Naive thymus-derived CD4-positive, alpha-beta T cell (primary cell): ENCODE measurements at regions of chr17 and their contacts with region 1.

Region 1: DNA sequence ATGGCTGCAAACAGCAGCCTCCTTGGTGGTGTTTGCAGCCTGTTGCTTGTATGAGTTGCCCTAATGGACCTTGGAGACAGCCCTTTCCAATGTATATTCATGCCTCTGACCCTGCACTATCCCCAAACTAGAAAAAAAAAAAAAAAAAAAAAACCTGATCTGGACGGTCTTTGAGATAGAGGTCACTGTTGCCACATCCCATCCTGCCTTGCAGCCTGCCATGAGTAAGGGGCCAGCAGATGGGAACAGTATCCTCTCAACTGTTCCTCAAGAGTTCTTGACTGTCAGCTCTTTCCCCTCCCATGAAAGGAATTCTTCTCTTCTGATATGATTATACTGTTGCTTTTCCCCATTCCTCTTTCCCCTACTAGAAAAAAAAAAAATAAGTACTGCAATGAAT is 152.4 kb downstream of the SSH2 start:
- DNase-seq: no peak
- ATAC-seq: no peak
- H3K4me3 ChIP-seq: no peak overlapping the region
- H3K4me3 Mint-ChIP-seq: no peak overlapping the region
- H3K27ac ChIP-seq: no peak overlapping the region
- H3K27ac Mint-ChIP-seq: no peak overlapping the region
- H3K4me1 ChIP-seq: peaks cover 0 to 5% of the 10 kb centered on the region in 2 donors
- H3K4me1 Mint-ChIP-seq: peaks cover 0 to 9% (median 8%) of the 10 kb centered on the region in 7 donors
- H3K27me3 ChIP-seq: no peaks in the 10 kb centered on the region
- H3K27me3 Mint-ChIP-seq: no peaks in the 10 kb centered on the region

Region 2: DNA sequence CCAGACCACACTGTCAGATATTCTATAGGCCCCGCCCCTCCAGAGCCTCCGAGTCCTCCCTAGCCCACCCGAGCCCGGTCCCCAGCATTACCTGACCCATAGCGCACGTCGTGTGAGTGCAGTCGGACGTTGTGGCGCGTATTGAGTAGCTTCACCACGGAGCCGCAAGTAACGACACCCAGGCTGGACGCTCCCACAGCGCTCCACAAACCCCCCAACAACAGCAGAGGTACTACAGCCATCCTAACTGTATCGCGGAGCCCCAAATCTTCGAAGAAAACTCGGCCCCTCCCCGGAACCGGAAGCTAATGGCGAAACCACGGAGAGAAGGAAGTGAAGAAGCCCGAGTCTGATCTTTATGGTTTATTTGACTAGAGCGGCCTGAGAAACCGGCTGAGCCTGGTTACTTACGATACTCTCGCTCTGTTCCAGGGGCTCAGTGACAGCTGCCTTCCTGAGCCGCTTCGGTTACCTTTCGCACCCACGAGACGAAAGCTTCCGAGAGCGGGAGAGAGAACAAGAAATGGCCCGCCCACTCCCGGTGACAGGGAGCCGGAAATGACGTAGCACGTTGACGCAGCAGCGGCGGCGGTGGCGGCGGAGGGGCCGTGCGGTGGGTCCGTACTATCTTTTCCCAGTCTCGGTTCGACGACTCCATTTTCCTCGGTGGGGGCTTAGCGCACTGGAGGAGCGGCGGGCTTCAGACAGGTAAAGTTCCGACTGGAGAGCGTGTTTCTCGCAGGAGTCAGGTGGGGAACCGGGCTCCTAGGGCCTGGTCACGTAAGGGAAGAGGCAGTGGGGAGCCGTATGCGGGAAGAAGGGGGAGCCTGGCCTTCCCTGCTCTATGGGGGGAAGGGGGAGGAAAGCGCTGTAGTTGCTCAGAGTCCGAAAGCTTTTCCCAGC is 1115.8 kb before region 1 on chr17 and contains the starts of genes SDF2 and SUPT6H:
- CTCF ChIA-PET with region 1: no interaction called
- POLR2A ChIA-PET with region 1: no interaction called
- intact Hi-C with region 1: no loop called
- DNase-seq: peak; percentile 91 to 97 (median 95)
- ATAC-seq: peak; percentile 91
- H3K4me3 ChIP-seq: peak within 1 kb of the TSS; percentile 72
- H3K4me3 Mint-ChIP-seq: peak within 1 kb of the TSS; percentile 86 to 100 (median 99)
- H3K27ac ChIP-seq: peak within 1 kb of the TSS; percentile 90
- H3K27ac Mint-ChIP-seq: peak within 1 kb of the TSS; percentile 98 to 100 (median 100)
- H3K4me1 ChIP-seq: peaks cover 24 to 35% of the 10 kb centered on the region in 2 donors
- H3K4me1 Mint-ChIP-seq: peaks cover 45 to 73% (median 67%) of the 10 kb centered on the region in 7 donors
- H3K27me3 ChIP-seq: no peaks in the 10 kb centered on the region
- H3K27me3 Mint-ChIP-seq: no peaks in the 10 kb centered on the region
- total RNA-seq, gene SDF2: 28.6 to 49.5 (median 43.8) TPM
- total RNA-seq, gene SUPT6H: 91.2 to 132 (median 98.5) TPM

Region 3: GRCh38 chr17:29579866-29580771 is 197.5 kb before region 1 on chr17:
- CTCF ChIA-PET with region 1: interaction called, 11 read pairs
- POLR2A ChIA-PET with region 1: interaction called, 5 read pairs
- intact Hi-C with region 1: loop called (anchors 1 kb)
- DNase-seq: peak; percentile 79 to 90 (median 87)
- ATAC-seq: peak; percentile 99
- H3K4me3 ChIP-seq: no peak overlapping the region
- H3K4me3 Mint-ChIP-seq: peak overlapping the region in 2 of 10 donors; percentile 2 to 32
- H3K27ac ChIP-seq: peak overlapping the region; percentile 53
- H3K27ac Mint-ChIP-seq: peak overlapping the region; percentile 7 to 96 (median 81)
- H3K4me1 ChIP-seq: peaks cover 2 to 17% of the 10 kb centered on the region in 2 donors
- H3K4me1 Mint-ChIP-seq: peaks cover 21 to 24% (median 22%) of the 10 kb centered on the region in 7 donors
- H3K27me3 ChIP-seq: no peaks in the 10 kb centered on the region
- H3K27me3 Mint-ChIP-seq: no peaks in the 10 kb centered on the region

Region 4: DNA sequence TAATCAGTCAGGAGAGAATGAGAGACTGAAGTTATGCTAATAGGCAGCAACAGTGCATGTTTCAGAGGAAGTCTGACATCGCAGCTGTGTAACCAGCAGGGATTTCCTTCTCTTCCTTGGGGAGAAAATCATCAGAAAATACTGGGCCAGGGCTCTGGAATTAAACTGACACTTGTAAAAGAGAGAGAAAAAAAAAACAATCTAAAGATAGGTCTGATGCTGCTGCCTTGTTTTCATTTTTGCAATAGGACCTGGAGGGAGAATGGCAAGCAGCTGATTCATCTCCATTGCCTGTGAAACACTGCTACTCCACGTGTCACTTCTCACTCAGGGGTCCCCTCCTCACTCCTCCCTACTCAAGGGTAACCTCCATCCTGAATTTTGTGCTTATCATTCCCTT is 137.2 kb before region 1 on chr17:
- CTCF ChIA-PET with region 1: interaction called, 122 read pairs
- POLR2A ChIA-PET with region 1: interaction called, 5 read pairs
- intact Hi-C with region 1: loop called (anchors 1 kb)
- DNase-seq: no peak
- ATAC-seq: no peak
- H3K4me3 ChIP-seq: no peak overlapping the region
- H3K4me3 Mint-ChIP-seq: no peak overlapping the region
- H3K27ac ChIP-seq: no peak overlapping the region
- H3K27ac Mint-ChIP-seq: peak overlapping the region in 8 of 9 donors; percentile 40 to 88 (median 61)
- H3K4me1 ChIP-seq: no peaks in the 10 kb centered on the region
- H3K4me1 Mint-ChIP-seq: peaks cover 0 to 35% (median 19%) of the 10 kb centered on the region in 7 donors
- H3K27me3 ChIP-seq: no peaks in the 10 kb centered on the region
- H3K27me3 Mint-ChIP-seq: no peaks in the 10 kb centered on the region

Region 5: GRCh38 chr17:29653995-29654714 is 123.5 kb before region 1 on chr17:
- CTCF ChIA-PET with region 1: interaction called, 13 read pairs
- POLR2A ChIA-PET with region 1: no interaction called
- intact Hi-C with region 1: no loop called
- DNase-seq: no peak
- ATAC-seq: no peak
- H3K4me3 ChIP-seq: no peak overlapping the region
- H3K4me3 Mint-ChIP-seq: no peak overlapping the region
- H3K27ac ChIP-seq: no peak overlapping the region
- H3K27ac Mint-ChIP-seq: peak overlapping the region in 3 of 9 donors; percentile 19 to 56 (median 27)
- H3K4me1 ChIP-seq: no peaks in the 10 kb centered on the region
- H3K4me1 Mint-ChIP-seq: peaks cover 0 to 6% (median 4%) of the 10 kb centered on the region in 7 donors
- H3K27me3 ChIP-seq: no peaks in the 10 kb centered on the region
- H3K27me3 Mint-ChIP-seq: no peaks in the 10 kb centered on the region

Region 6: DNA sequence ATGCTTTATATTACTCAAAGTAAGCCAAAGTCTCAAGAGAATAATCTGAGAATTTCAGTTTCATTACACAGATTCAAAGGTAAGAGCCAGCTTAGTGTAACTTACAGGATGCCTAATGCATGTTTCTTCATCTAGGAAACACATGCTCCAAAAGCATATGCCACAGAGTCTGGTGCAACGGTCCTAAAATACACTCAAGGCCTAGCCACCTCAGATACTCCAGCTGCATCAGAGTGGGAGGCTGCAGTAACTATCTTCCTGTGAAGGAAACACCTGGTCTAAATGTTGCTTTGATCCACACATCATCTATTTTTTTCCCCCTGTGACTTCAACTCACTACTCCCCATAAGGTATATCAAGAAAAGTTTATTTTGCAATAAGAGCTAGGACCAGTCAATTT is 103.4 kb before region 1 on chr17:
- CTCF ChIA-PET with region 1: interaction called, 15 read pairs
- POLR2A ChIA-PET with region 1: no interaction called
- intact Hi-C with region 1: no loop called
- DNase-seq: peak in 3 of 9 donors; percentile 7 to 31 (median 8)
- ATAC-seq: no peak
- H3K4me3 ChIP-seq: no peak overlapping the region
- H3K4me3 Mint-ChIP-seq: peak overlapping the region in 8 of 10 donors; percentile 21 to 62 (median 42)
- H3K27ac ChIP-seq: no peak overlapping the region
- H3K27ac Mint-ChIP-seq: peak overlapping the region in 8 of 9 donors; percentile 11 to 87 (median 68)
- H3K4me1 ChIP-seq: peaks cover 0 to 11% of the 10 kb centered on the region in 2 donors
- H3K4me1 Mint-ChIP-seq: peaks cover 13 to 39% (median 31%) of the 10 kb centered on the region in 7 donors
- H3K27me3 ChIP-seq: no peaks in the 10 kb centered on the region
- H3K27me3 Mint-ChIP-seq: no peaks in the 10 kb centered on the region

Region 7: DNA sequence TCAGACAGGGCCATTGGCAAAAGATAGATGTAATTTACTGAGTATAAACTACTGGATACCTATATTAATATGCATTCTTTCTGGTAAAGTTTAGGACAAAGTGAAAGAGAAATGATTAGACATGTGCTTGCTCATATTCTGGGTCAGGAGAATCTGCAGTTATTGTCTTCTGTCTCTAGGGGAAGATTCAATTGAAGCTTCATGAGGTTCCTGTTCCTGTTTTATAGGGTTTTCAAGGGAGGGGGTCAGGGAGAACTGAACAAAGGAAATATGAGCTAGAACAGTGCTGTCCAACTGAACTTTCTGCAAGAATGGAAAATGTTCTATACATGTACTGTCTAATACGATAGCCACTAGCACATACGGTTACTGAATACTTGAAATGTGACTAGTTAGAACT is 95.6 kb before region 1 on chr17:
- CTCF ChIA-PET with region 1: interaction called, 9 read pairs
- POLR2A ChIA-PET with region 1: no interaction called
- intact Hi-C with region 1: loop called in 1 of 2 experiments (anchors 1 kb)
- DNase-seq: peak in 2 of 9 donors; percentile 15 to 17
- ATAC-seq: peak; percentile 76
- H3K4me3 ChIP-seq: no peak overlapping the region
- H3K4me3 Mint-ChIP-seq: peak overlapping the region in 3 of 10 donors; percentile 0 to 7 (median 2)
- H3K27ac ChIP-seq: no peak overlapping the region
- H3K27ac Mint-ChIP-seq: peak overlapping the region in 7 of 9 donors; percentile 21 to 80 (median 43)
- H3K4me1 ChIP-seq: peaks cover 0 to 9% of the 10 kb centered on the region in 2 donors
- H3K4me1 Mint-ChIP-seq: peaks cover 12 to 51% (median 28%) of the 10 kb centered on the region in 7 donors
- H3K27me3 ChIP-seq: no peaks in the 10 kb centered on the region
- H3K27me3 Mint-ChIP-seq: no peaks in the 10 kb centered on the region

Region 8: DNA sequence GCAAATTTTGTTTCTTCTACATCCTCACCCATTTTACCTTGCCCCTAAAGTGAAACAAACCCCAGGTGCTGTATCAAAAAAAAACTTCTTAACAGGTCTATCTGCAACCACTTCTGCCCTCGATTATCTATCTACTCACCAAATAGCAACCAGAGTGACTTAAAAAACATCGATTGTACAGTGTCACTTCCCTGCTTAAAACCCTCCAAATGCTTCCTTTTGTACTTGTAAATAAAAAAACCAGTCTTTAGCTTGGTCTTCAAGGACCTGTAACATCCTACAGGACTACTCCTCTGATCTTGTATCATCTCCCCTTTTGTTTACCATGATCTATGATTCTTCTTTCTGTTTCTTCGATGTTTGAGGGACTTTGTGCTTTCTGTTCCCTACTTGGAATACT is 72.3 kb before region 1 on chr17:
- CTCF ChIA-PET with region 1: interaction called, 6 read pairs
- POLR2A ChIA-PET with region 1: no interaction called
- intact Hi-C with region 1: loop called in 1 of 2 experiments (anchors 1 kb)
- DNase-seq: peak in 6 of 9 donors; percentile 16 to 41 (median 24)
- ATAC-seq: peak; percentile 6
- H3K4me3 ChIP-seq: peak overlapping the region; percentile 22
- H3K4me3 Mint-ChIP-seq: peak overlapping the region; percentile 4 to 81 (median 72)
- H3K27ac ChIP-seq: peak overlapping the region; percentile 73
- H3K27ac Mint-ChIP-seq: peak overlapping the region; percentile 85 to 99 (median 96)
- H3K4me1 ChIP-seq: peaks cover 35 to 41% of the 10 kb centered on the region in 2 donors
- H3K4me1 Mint-ChIP-seq: peaks cover 18 to 69% (median 51%) of the 10 kb centered on the region in 7 donors
- H3K27me3 ChIP-seq: no peaks in the 10 kb centered on the region
- H3K27me3 Mint-ChIP-seq: no peaks in the 10 kb centered on the region

Region 9: DNA sequence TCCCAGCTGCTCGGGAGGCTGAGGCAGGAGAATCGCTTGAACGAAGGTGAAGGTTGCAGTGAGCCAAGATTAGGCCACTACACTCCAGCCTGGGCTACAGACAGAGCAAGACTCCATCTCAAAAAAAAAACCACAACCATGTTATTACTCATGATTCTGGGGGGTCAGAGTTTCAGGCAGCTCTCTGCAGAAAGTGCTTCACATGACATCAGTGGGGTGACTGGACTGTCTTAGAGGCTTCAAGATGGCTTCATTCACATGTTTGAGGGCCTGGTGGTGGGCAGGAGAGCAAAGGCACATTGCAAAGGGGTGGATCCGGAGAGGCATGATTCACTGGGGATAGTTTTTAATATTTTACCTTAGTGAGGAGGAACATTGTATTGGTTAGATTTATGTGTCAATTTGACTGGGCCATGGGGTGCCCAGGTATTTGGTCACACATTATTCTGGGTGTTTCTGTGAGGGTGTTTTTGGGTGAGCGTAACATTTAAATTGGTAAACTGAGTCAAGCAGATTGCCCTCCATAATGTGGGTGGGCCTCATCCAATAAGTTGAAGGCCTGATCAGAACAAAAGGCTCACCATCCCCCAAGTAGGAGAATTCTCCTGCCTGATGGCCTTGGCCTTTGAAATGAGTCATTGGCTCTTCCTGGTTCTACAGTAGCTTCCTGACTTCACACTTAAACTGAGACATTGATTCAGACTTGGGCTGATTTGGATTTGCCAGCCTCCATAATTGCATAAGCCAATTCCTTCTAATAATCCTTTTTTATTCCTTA is 809.3 kb after region 1 on chr17:
- CTCF ChIA-PET with region 1: no interaction called
- POLR2A ChIA-PET with region 1: no interaction called
- intact Hi-C with region 1: no loop called
- DNase-seq: no peak
- ATAC-seq: no peak
- H3K4me3 ChIP-seq: no peak overlapping the region
- H3K4me3 Mint-ChIP-seq: no peak overlapping the region
- H3K27ac ChIP-seq: no peak overlapping the region
- H3K27ac Mint-ChIP-seq: no peak overlapping the region
- H3K4me1 ChIP-seq: no peaks in the 10 kb centered on the region
- H3K4me1 Mint-ChIP-seq: peaks cover 0 to 6% (median 0%) of the 10 kb centered on the region in 7 donors
- H3K27me3 ChIP-seq: no peaks in the 10 kb centered on the region
- H3K27me3 Mint-ChIP-seq: peaks cover 0 to 8% (median 2%) of the 10 kb centered on the region in 5 donors